PC-3 (cell line): ENCODE measurements at regions of chr1 and their contacts with region 1.

Region 1: GRCh38 chr1:67626495-67627235 is 58.3 kb upstream of the GADD45A start:
- DNase-seq: peak; percentile 81
- ATAC-seq: peak; percentile 64
- H3K4me3 ChIP-seq: no peak overlapping the region
- H3K27ac ChIP-seq: peak overlapping the region; percentile 83
- H3K4me1 ChIP-seq: peaks cover 54% of the 10 kb centered on the region
- H3K27me3 ChIP-seq: no peaks in the 10 kb centered on the region
- CTCF ChIP-seq: no peak

Region 2: DNA sequence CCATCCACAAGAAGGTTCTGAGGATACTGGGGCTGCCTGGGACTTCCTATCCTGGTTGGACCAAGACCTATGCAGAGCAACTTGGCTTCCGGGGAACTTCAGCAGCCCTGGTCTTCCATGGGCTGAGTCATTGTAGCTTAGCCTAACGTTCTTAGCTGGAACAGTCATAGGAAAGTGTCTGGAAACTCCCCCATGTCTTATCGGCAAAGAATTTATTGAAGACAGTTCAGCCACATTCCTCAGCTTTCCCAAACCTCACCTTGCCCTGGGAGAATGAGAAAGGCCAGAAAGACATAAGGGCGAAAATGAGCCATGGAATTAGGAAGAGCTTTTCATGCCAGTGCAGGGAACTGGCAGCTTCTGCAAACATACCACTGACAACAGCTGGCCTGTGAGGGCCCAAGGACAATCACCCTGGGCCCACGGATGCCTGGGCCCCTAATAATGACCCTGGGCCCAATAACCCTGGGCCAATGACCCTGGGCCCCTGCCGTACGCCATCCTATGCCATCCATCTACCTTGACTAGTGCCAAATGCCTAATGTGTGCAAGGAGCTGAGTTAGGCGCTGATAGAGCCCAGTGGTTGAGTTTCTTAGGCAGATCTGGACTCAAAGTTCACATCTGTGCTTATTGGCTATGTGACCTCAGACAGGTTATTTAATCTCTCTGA is 56.1 kb before region 1 on chr1:
- CTCF ChIA-PET with region 1: no interaction called
- POLR2A ChIA-PET with region 1: no interaction called
- intact Hi-C with region 1: loop called (anchors 5 kb)
- DNase-seq: peak; percentile 96
- ATAC-seq: peak; percentile 96
- H3K4me3 ChIP-seq: no peak overlapping the region
- H3K27ac ChIP-seq: peak overlapping the region; percentile 90
- H3K4me1 ChIP-seq: peaks cover 40% of the 10 kb centered on the region
- H3K27me3 ChIP-seq: no peaks in the 10 kb centered on the region
- CTCF ChIP-seq: no peak

Region 3: GRCh38 chr1:67612788-67613241 is 13.8 kb before region 1 on chr1:
- CTCF ChIA-PET with region 1: no interaction called
- POLR2A ChIA-PET with region 1: no interaction called
- intact Hi-C with region 1: loop called (anchors 2 kb)
- DNase-seq: peak; percentile 35
- ATAC-seq: peak; percentile 76
- H3K4me3 ChIP-seq: no peak overlapping the region
- H3K27ac ChIP-seq: peak overlapping the region; percentile 23
- H3K4me1 ChIP-seq: peaks cover 23% of the 10 kb centered on the region
- H3K27me3 ChIP-seq: no peaks in the 10 kb centered on the region
- CTCF ChIP-seq: no peak

Region 4: DNA sequence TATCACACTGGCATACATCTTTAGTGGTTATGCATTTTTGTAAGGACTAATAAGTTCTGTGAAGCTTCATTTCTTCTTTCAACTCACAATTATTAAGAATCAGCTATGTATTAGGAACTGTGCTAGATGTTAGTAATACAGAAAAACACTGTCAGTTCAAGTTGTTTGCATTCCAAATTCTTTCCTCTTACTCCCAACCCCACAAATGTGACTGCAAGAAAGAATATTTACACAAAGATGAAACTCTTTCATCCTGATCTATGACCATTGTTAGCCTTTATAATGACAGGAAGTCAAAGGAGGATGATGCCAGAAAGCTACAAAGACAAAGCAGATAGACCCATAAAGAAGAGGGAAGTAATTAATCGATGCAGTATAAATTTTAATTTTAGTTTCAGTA is 37.4 kb after region 1 on chr1:
- CTCF ChIA-PET with region 1: no interaction called
- POLR2A ChIA-PET with region 1: no interaction called
- intact Hi-C with region 1: loop called (anchors 2 kb)
- DNase-seq: peak; percentile 66
- ATAC-seq: peak; percentile 83
- H3K4me3 ChIP-seq: no peak overlapping the region
- H3K27ac ChIP-seq: no peak overlapping the region
- H3K4me1 ChIP-seq: peaks cover 8% of the 10 kb centered on the region
- H3K27me3 ChIP-seq: no peaks in the 10 kb centered on the region
- CTCF ChIP-seq: no peak

Region 5: GRCh38 chr1:67760030-67760821 is 133.6 kb after region 1 on chr1:
- CTCF ChIA-PET with region 1: interaction called, 3 read pairs
- POLR2A ChIA-PET with region 1: no interaction called
- intact Hi-C with region 1: loop called (anchors 10 kb)
- DNase-seq: peak; percentile 85
- ATAC-seq: peak; percentile 82
- H3K4me3 ChIP-seq: peak overlapping the region; percentile 9; the same call in 1 of the 2 replicates
- H3K27ac ChIP-seq: peak overlapping the region; percentile 45
- H3K4me1 ChIP-seq: peaks cover 32% of the 10 kb centered on the region
- H3K27me3 ChIP-seq: no peaks in the 10 kb centered on the region
- CTCF ChIP-seq: peak; percentile 88